Mammary epithelial cell (primary cell): ENCODE measurements at regions of chr3 and their contacts with region 1.

Region 1: GRCh38 chr3:195850857-195851543 is 39.3 kb upstream of the MUC4 start:
- DNase-seq: peak; percentile 76
- H3K4me3 ChIP-seq: no peak overlapping the region
- H3K27ac ChIP-seq: no peak overlapping the region
- H3K4me1 ChIP-seq: peaks cover 6% of the 10 kb centered on the region
- H3K27me3 ChIP-seq: no peaks in the 10 kb centered on the region
- CTCF ChIP-seq: peak; percentile 100

Region 2: DNA sequence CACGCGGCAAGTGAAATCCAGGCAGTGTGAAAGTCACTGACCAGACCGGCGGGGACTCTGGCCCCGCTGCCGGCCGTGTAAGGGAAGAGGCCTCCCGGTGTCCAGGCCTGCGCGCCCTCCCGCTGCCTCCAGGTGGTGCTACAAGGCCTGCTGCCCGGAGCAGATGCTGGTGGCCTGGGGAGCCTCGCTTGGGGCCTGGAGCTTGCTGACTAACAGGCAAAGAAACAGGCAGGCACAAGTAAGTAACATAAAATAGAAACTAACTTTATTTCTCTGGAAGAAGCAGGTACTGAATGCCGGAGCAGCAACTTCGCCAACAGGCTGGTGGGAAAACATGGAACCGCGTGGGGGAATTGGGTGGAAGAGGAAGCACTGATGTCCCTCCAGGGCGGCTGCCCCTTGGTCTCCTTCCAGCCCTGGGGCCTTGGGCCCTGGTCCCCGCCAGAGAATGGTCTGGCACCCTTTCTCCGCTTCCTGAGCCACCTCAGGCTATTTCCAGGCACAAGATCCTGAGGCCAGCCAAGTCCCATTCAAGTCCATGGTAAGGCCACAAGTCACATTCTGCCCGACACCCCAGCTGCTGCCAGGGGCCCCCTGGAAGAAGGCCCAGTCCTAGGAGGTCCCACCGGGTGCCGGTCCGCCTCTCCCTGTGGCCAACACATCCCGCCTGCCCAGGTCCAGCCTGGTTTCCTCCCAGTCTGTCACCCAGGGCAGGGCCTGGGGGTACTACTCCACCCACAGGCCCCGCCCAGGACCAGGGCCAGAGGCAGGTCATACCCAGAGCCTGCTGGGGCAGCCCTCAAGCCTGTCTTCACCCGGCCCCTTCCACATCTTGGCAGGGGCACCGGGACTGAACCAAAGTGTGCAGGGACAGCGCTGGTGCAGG is 12.4 kb after region 1 on chr3:
- CTCF ChIA-PET with region 1: interaction called, 29 read pairs
- dilution Hi-C with region 1: no loop called
- in situ Hi-C with region 1: no loop called
- intact Hi-C with region 1: no loop called
- DNase-seq: peak; percentile 87
- H3K4me3 ChIP-seq: no peak overlapping the region
- H3K27ac ChIP-seq: peak overlapping the region; percentile 38
- H3K4me1 ChIP-seq: peaks cover 32% of the 10 kb centered on the region
- H3K27me3 ChIP-seq: no peaks in the 10 kb centered on the region
- CTCF ChIP-seq: peak; percentile 91 to 98

Region 3: DNA sequence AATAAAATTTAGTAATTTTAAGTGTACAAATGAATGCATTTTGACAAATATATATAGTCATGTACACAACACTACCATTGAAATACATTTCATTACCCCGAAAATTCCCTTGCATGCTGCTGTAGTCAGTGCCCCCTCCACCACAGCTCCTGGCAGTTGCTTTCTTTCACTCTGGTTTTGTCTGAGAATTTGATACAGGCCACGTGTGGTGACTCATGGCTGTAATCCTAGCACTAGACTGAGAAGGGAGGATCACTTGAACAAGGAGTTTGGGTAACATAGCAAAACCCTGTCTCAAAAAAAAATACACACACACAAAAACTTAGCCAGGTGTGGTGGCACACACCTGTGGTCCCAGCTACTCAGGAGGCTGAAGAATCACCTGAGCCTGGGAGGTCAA is 165.5 kb after region 1 on chr3:
- CTCF ChIA-PET with region 1: no interaction called
- dilution Hi-C with region 1: no loop called
- in situ Hi-C with region 1: loop called in 1 of 2 experiments (anchors 10 kb)
- intact Hi-C with region 1: no loop called
- DNase-seq: peak; percentile 85
- H3K4me3 ChIP-seq: no peak overlapping the region
- H3K27ac ChIP-seq: no peak overlapping the region
- H3K4me1 ChIP-seq: no peaks in the 10 kb centered on the region
- H3K27me3 ChIP-seq: peaks cover 2% of the 10 kb centered on the region
- CTCF ChIP-seq: no peak

Region 4: GRCh38 chr3:196198771-196199753 is 348.1 kb after region 1 on chr3:
- CTCF ChIA-PET with region 1: no interaction called
- dilution Hi-C with region 1: no loop called
- in situ Hi-C with region 1: loop called in 1 of 2 experiments (anchors 25 kb)
- intact Hi-C with region 1: loop called (anchors 1 kb)
- DNase-seq: no peak
- H3K4me3 ChIP-seq: no peak overlapping the region
- H3K27ac ChIP-seq: no peak overlapping the region
- H3K4me1 ChIP-seq: peaks cover 2% of the 10 kb centered on the region
- H3K27me3 ChIP-seq: no peaks in the 10 kb centered on the region
- CTCF ChIP-seq: peak; percentile 42